Sigmoid colon (tissue), 7 donors: ENCODE measurements at regions of chr16 and their contacts with region 1.

Region 1: DNA sequence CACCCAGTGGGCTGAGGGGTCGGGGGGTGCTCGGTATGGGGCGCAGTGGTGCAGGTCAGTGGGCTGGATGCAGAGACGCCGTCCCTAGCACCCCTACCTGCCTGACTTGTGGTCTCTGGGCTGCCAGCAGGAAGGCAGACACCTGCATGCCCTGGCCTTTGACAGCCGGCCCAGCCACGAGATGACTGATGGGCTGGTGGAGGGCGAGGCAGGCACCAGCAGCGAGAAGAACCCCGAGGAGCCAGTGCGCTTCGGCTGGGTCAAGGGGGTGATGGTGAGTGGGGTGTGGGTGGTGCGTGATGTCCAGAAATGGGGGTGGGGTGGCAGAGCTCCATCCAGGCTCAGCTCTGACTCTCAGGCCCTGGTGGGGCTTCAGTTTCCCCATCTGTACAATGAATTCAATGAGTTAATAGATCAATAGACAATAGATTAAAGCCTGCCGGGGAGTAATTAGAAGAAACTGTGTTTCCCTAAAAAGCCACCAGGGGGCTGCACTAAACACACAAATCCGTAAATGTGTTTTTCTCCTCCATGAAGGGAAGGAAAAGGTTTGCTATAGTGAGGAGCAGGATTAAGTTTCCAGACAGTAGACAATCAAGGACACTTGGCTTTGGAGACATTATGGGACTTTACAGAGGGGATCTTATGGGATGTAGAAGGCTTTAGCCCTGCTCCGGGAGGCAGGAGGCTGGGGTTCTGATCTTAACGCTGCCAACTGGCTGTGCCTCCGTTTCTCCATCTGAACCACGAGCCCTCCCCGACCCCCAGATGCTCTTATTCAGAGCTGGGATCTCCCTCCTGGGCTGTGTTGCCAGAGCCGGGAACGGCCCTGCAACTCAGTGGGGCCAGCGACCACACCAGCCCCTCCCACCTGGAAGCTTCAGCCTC is 2.2 kb downstream of the SLC12A3 start:
- DNase-seq: no peak
- H3K4me3 ChIP-seq: no peak overlapping the region
- H3K27ac ChIP-seq: no peak overlapping the region
- H3K4me1 ChIP-seq: peaks cover 0 to 9% (median 4%) of the 10 kb centered on the region in 4 donors
- H3K27me3 ChIP-seq: no peaks in the 10 kb centered on the region
- CTCF ChIP-seq: peak; percentile 42 to 74 (median 66)
- EP300 ChIP-seq: no peak
- POLR2A ChIP-seq: no peak

Region 2: GRCh38 chr16:57045694-57046381 is 178.7 kb after region 1 on chr16:
- intact Hi-C with region 1: loop called (anchors 1 kb)
- DNase-seq: peak; percentile 84
- H3K4me3 ChIP-seq: no peak overlapping the region
- H3K27ac ChIP-seq: no peak overlapping the region
- H3K4me1 ChIP-seq: peaks cover 0 to 11% (median 5%) of the 10 kb centered on the region in 4 donors
- H3K27me3 ChIP-seq: no peaks in the 10 kb centered on the region
- CTCF ChIP-seq: peak; percentile 39 to 58 (median 40)
- EP300 ChIP-seq: no peak
- POLR2A ChIP-seq: no peak